Activated naive CD4-positive, alpha-beta T cell treated with anti-CD3 and anti-CD28 coated beads for 36 hours (primary cell): ENCODE measurements at regions of chr1 and their contacts with region 1.

Region 1: GRCh38 chr1:113783254-113784099 is 24.2 kb upstream of the PHTF1 start:
- DNase-seq: peak; percentile 60
- H3K4me3 Mint-ChIP-seq: peak overlapping the region; percentile 36
- H3K27ac Mint-ChIP-seq: peak overlapping the region; percentile 95
- H3K4me1 Mint-ChIP-seq: peaks cover 41% of the 10 kb centered on the region
- H3K27me3 Mint-ChIP-seq: no peaks in the 10 kb centered on the region

Region 2: GRCh38 chr1:113133038-113133437 is 650.4 kb before region 1 on chr1:
- CTCF ChIA-PET with region 1: no interaction called
- intact Hi-C with region 1: loop called (anchors 5 kb)
- DNase-seq: peak; percentile 69
- H3K4me3 Mint-ChIP-seq: no peak overlapping the region
- H3K27ac Mint-ChIP-seq: peak overlapping the region; percentile 76
- H3K4me1 Mint-ChIP-seq: peaks cover 64% of the 10 kb centered on the region
- H3K27me3 Mint-ChIP-seq: no peaks in the 10 kb centered on the region

Region 3: GRCh38 chr1:113734357-113735055 is 49.0 kb before region 1 on chr1:
- CTCF ChIA-PET with region 1: no interaction called
- intact Hi-C with region 1: no loop called
- DNase-seq: no peak
- H3K4me3 Mint-ChIP-seq: no peak overlapping the region
- H3K27ac Mint-ChIP-seq: no peak overlapping the region
- H3K4me1 Mint-ChIP-seq: peaks cover 3% of the 10 kb centered on the region
- H3K27me3 Mint-ChIP-seq: no peaks in the 10 kb centered on the region

Region 4: DNA sequence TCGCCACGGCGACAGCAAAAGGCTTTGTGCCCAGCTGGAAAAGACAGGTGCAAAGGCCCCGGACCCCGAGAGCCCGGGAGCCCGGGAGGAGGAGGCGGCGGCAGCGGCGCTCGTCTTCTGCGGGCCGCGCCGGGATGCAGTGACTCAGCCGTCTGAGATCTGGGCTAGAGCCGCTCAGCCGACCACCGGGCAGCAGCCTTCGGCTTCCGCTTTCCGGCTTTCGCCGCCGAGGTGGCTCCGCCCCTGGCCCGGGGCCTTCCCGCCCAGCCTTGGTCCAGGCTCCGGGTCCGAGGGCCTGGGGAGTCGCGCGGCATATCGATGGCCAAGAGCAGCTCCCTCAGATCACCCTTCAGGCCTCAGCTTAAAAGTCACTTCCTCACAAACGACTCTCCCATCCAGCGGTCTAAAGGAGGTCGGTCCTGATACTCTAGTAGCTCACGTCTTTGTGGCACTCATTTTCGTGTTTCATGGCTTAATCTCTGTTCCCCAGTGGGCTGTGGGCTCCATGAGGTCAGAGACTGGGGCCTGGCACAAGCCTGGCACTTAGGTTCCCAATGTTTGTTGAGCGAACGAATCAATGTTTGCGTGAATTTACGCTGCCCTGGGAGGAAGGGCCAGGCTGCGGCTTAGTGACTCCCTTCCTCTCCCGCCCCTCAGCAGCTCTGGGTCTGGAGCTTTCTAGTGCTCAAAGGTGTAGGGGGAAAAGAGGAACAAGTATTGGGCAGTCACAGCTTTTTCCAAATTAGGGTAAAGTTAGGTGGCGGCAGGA is 24.0 kb before region 1 on chr1 and contains the start of gene PHTF1:
- CTCF ChIA-PET with region 1: interaction called, 3 read pairs
- intact Hi-C with region 1: loop called (anchors 1 kb)
- DNase-seq: peak; percentile 63
- H3K4me3 Mint-ChIP-seq: peak within 1 kb of the TSS; percentile 92
- H3K27ac Mint-ChIP-seq: peak within 1 kb of the TSS; percentile 96
- H3K4me1 Mint-ChIP-seq: peaks cover 14% of the 10 kb centered on the region
- H3K27me3 Mint-ChIP-seq: no peaks in the 10 kb centered on the region
- total RNA-seq, gene PHTF1: 5.4 to 6.3 TPM

Region 5: DNA sequence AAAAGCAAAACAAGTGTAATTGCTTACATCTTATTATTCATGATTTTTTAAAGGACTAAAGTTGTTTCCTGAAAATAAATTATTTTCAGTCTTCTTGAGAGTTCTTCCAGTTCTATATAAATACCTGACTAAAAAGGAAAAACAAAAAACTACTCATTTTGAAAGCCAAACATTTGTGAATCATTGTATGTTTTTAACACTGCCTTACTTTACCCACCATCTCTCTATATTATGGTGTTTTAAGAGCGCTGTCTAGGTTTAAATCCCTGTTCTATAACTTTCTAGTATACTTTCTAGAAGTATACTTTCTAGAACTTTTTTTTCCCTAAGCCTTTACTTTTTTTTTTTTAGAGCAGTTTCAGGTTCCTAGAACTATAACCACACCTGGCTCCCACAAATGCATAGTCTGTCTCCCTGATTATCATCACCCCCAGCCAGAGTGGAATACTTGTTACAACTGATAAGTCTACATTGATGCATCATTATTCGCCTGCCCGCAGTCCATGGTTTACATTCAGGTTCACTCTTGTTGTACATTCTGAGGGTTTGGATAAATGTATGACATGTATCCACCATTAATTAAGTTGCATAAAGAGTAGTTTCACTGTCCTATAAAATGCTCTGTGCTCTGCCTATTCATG is 19.0 kb after region 1 on chr1:
- CTCF ChIA-PET with region 1: interaction called, 3 read pairs
- intact Hi-C with region 1: loop called (anchors 1 kb)
- DNase-seq: peak; percentile 29
- H3K4me3 Mint-ChIP-seq: no peak overlapping the region
- H3K27ac Mint-ChIP-seq: peak overlapping the region; percentile 25
- H3K4me1 Mint-ChIP-seq: peaks cover 73% of the 10 kb centered on the region
- H3K27me3 Mint-ChIP-seq: no peaks in the 10 kb centered on the region

Region 6: DNA sequence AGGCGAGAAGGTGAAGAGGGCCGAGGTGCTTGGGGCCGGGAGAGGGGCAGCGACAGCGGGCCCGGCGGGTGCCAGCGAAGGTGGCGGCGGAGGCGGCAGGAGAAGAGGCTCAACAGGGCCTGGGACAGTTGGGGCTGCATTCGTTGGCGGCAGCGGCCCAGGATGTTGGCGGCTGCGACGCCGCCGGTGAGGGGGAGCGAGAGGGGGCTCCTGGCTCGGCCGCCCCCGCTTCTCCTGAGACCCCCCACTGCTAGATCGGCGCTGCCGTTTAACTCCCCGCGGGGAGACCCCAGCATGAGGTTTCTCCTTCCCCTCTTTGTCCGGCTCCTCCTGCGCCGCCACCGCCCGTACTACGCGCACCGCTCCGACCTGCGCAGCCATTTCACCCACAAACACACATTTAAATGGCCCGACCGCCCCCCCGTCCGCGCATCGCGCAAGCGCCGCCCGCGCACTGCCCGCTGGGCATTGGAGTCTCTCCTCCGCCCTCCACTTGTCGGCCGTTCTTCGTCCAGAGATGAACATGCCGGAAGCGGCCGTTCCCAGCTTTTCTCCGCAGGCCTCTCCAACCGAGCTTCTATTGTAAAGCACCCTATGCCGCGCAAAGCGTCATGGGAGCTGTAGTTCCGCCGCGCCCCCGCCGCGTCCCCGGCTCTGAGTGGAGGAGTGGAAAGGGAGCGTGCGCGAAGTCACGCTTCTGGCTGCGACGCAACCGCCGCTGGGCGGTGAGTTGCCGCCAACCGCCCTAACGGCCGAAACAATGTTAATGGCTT is 28.6 kb after region 1 on chr1 and contains the start of gene RSBN1:
- CTCF ChIA-PET with region 1: interaction called, 5 read pairs
- intact Hi-C with region 1: loop called (anchors 1 kb)
- DNase-seq: peak; percentile 99
- H3K4me3 Mint-ChIP-seq: peak within 1 kb of the TSS; percentile 98
- H3K27ac Mint-ChIP-seq: peak within 1 kb of the TSS; percentile 94
- H3K4me1 Mint-ChIP-seq: peaks cover 31% of the 10 kb centered on the region
- H3K27me3 Mint-ChIP-seq: no peaks in the 10 kb centered on the region
- total RNA-seq, gene RSBN1: 13.6 to 14.3 TPM

Region 7: GRCh38 chr1:113835642-113836307 is 52.3 kb after region 1 on chr1:
- CTCF ChIA-PET with region 1: no interaction called
- intact Hi-C with region 1: no loop called
- DNase-seq: peak; percentile 35
- H3K4me3 Mint-ChIP-seq: no peak overlapping the region
- H3K27ac Mint-ChIP-seq: no peak overlapping the region
- H3K4me1 Mint-ChIP-seq: peaks cover 3% of the 10 kb centered on the region
- H3K27me3 Mint-ChIP-seq: no peaks in the 10 kb centered on the region

Region 8: GRCh38 chr1:113904674-113905434 is 121.4 kb after region 1 on chr1 and contains the starts of genes AP4B1 and DCLRE1B:
- CTCF ChIA-PET with region 1: no interaction called
- intact Hi-C with region 1: loop called (anchors 1 kb)
- DNase-seq: peak; percentile 99
- H3K4me3 Mint-ChIP-seq: peak within 1 kb of the TSS; percentile 99
- H3K27ac Mint-ChIP-seq: peak within 1 kb of the TSS; percentile 97
- H3K4me1 Mint-ChIP-seq: peaks cover 51% of the 10 kb centered on the region
- H3K27me3 Mint-ChIP-seq: no peaks in the 10 kb centered on the region
- total RNA-seq, gene AP4B1: 35.7 to 40.2 TPM
- total RNA-seq, gene DCLRE1B: 17.7 to 18.3 TPM